PC-9 (cell line): ENCODE measurements at regions of chr18 and their contacts with region 1.

Region 1: DNA sequence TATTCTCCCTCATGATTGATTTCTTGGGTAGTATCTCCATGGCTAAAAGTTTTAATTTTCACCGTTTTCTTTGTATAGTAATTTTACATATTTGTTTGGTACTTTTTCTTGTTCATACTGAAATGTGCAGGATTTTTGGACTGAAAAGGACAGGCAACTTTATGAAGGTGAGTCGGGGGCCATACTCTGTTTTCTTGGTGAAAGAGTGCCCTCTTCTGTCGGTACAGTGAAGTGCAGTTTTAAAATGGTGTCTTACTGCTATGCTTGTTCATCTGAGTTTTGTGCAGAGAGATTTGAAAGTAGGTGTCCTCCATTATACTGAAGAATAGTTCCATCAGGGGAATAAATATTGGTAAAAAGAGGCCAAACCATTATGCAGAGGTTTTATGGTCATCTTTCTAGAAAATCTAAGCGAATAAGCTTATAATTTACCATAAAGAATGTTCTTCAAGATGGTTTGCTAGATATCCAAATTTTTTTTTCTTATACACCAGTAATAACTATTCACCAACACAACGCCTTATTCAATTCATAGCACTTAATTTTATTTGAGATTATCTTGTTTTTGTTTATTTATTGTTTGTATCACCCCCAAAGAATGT is 8.7 kb upstream of the SERPINB13 start:
- DNase-seq: peak in 1 of 2 experiments; percentile 20
- H3K4me3 ChIP-seq: no peak overlapping the region
- H3K27ac ChIP-seq: no peak overlapping the region
- H3K4me1 ChIP-seq: no peaks in the 10 kb centered on the region
- H3K27me3 ChIP-seq: no peaks in the 10 kb centered on the region
- CTCF ChIP-seq: peak; percentile 90

Region 2: GRCh38 chr18:63741769-63742168 is 163.3 kb after region 1 on chr18:
- CTCF ChIA-PET with region 1: interaction called, 17 read pairs
- POLR2A ChIA-PET with region 1: interaction called, 16 read pairs
- intact Hi-C with region 1: loop called (anchors 5 kb)
- DNase-seq: no peak
- H3K4me3 ChIP-seq: no peak overlapping the region
- H3K27ac ChIP-seq: no peak overlapping the region
- H3K4me1 ChIP-seq: peaks cover 19% of the 10 kb centered on the region
- H3K27me3 ChIP-seq: no peaks in the 10 kb centered on the region
- CTCF ChIP-seq: peak; percentile 73